GM12878 (cell line): ENCODE measurements at regions of chr17 and their contacts with region 1.

Region 1: DNA sequence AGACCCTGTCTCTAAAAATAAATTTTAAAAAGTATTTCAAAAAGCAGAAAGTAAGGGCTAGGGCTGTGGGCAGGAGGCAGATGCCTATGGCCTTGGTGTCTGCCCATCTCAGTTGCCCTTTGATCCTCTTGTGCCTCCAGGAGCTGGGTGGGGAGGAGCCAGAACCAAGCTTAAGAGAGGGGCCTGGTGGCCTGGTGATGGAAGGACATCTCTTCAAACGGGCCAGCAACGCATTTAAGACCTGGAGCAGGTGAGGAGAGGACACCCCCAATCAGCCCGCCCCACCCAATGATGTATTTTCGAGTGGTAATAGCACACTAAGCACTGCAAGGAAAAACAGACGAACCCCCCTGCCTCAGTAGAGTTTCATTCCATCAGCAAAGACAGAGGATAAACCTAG is 7.6 kb upstream of the KCTD11 start:
- DNase-seq: no peak
- ATAC-seq: no peak
- H3K4me3 ChIP-seq: no peak overlapping the region
- H3K27ac ChIP-seq: no peak overlapping the region
- H3K4me1 ChIP-seq: no peaks in the 10 kb centered on the region; the same call in 1 of the 2 replicates
- H3K27me3 ChIP-seq: no peaks in the 10 kb centered on the region
- CTCF ChIP-seq: no peak
- EP300 ChIP-seq: no peak
- POLR2A ChIP-seq: no peak
- RAD21 ChIP-seq: no peak

Region 2: DNA sequence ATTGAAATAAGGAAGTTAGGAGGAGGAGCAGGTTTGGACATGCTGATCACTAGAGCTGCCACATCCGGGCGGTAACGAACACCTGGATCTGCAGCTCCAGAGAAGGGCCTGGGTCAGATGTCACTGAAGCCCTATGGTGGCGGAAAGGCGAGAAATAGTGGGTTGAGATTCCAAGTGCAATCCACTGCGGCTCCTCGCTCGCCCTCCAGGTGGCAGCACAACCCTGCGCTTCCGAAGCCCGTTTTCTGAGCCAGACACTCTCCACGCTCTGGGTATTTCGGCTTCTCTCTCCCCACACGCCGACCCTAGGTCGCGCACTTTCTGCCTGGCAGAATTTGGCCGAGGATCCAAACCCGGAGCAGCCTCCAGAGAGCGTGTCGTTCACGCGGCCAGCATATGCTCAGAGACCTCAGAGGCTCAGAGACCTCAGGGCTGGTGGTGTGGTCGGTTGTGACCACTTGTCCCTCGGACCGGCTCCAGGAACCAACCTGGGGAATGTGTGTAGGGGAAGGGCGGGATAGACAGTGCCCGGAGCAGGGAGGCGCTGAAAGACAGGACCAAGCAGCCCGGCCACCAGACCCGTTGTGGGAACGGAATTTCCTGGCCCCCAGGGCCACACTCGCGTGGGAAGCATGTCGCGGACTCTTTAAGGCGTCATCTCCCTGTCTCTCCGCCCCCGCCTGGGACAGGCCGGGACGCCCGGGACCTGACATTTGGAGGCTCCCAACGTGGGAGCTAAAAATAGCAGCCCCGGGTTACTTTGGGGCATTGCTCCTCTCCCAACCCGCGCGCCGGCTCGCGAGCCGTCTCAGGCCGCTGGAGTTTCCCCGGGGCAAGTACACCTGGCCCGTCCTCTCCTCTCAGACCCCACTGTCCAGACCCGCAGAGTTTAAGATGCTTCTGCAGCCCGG is 63.6 kb before region 1 on chr17:
- CTCF ChIA-PET with region 1: interaction called, 4 read pairs
- POLR2A ChIA-PET with region 1: no interaction called
- RAD21 ChIA-PET with region 1: no interaction called
- SMC1A ChIA-PET with region 1: no interaction called
- in situ Hi-C with region 1: no loop called
- intact Hi-C with region 1: loop called (anchors 2 kb)
- DNase-seq: peak; percentile 40
- ATAC-seq: peak; percentile 90
- H3K4me3 ChIP-seq: peak overlapping the region; percentile 56
- H3K27ac ChIP-seq: no peak overlapping the region
- H3K4me1 ChIP-seq: peaks cover 8% of the 10 kb centered on the region
- H3K27me3 ChIP-seq: no peaks in the 10 kb centered on the region; a peak in 1 of 4 replicates
- CTCF ChIP-seq: peak; percentile 96 to 98 (median 98); a peak in 5 of 6 replicates
- EP300 ChIP-seq: no peak
- POLR2A ChIP-seq: 0 out of 2 replicates have a peak, but pooled peaks have one; percentile 28
- RAD21 ChIP-seq: peak; percentile 90

Region 3: DNA sequence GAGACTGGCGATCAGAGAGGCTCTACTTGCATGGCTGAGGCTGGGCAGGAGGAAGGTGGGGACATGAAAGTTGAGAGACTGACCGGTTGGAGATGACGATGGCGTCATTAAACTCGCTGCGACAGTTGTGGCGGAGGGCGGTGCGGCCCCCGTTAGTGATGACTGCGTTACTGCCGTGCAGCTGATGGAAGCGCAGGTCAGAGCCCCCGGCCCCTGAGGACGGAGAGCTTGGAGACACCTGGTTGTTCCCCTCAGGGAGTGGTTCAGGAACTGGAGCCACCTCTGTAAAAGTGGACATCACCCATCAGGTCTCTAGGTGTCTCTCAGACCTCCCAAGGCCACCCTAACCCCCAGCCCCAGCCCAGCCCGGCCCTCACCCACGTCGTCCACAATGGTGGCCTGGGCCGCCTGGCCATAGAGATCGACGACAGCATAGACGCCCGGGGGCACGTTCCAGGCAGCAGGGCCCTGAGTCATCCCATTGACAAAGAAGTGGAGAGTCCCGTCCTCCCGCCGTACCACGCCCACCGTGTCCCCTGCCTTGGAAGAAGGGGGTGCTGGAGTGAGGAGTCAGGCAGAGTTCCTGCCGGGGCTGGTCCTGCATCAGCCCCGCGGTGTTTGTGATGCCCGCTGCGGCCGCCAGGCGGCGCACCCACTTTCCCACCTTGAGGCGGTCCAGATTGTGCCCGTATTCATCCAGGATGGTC is 20.5 kb before region 1 on chr17:
- CTCF ChIA-PET with region 1: interaction called, 49 read pairs
- POLR2A ChIA-PET with region 1: interaction called, 31 read pairs
- RAD21 ChIA-PET with region 1: interaction called, 12 read pairs
- SMC1A ChIA-PET with region 1: interaction called, 18 read pairs
- in situ Hi-C with region 1: no loop called
- intact Hi-C with region 1: loop called (anchors 1 kb)
- DNase-seq: no peak
- ATAC-seq: peak; percentile 77
- H3K4me3 ChIP-seq: no peak overlapping the region
- H3K27ac ChIP-seq: no peak overlapping the region
- H3K4me1 ChIP-seq: peaks cover 5% of the 10 kb centered on the region
- H3K27me3 ChIP-seq: no peaks in the 10 kb centered on the region
- CTCF ChIP-seq: peak; percentile 88 to 99 (median 98)
- EP300 ChIP-seq: no peak
- POLR2A ChIP-seq: no peak
- RAD21 ChIP-seq: peak; percentile 70

Region 4: DNA sequence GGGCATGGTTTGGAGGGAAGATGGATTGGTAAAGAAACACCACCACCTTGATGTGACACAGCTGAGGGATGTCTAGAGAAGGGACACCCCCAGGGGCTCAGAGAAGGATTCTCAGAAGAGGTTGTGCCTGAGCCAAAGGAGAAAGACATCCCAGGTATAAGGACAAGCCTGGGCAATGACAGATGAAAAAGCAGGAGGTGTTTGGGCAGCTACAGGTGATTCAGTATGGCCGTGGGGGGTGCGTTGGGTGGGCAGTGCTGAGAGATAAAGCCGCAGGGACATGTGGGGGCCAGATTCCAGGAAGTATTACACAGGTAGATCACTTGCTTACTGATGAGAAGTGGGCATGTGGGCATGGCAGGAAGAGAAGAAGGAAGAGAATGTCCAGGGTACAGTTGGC is 17.5 kb after region 1 on chr17:
- CTCF ChIA-PET with region 1: no interaction called
- POLR2A ChIA-PET with region 1: no interaction called
- RAD21 ChIA-PET with region 1: no interaction called
- SMC1A ChIA-PET with region 1: no interaction called
- in situ Hi-C with region 1: no loop called
- intact Hi-C with region 1: no loop called
- DNase-seq: no peak
- ATAC-seq: no peak
- H3K4me3 ChIP-seq: no peak overlapping the region
- H3K27ac ChIP-seq: no peak overlapping the region
- H3K4me1 ChIP-seq: no peaks in the 10 kb centered on the region
- H3K27me3 ChIP-seq: no peaks in the 10 kb centered on the region
- CTCF ChIP-seq: no peak
- EP300 ChIP-seq: no peak
- POLR2A ChIP-seq: no peak
- RAD21 ChIP-seq: no peak